Activated naive CD4-positive, alpha-beta T cell treated with anti-CD3 and anti-CD28 coated beads, Interleukin-2, amount 10 ng/mL, durations not matched to agents 7 days and 5 days (primary cell): ENCODE measurements at regions of chr17 and their contacts with region 1.

Region 1: GRCh38 chr17:40317880-40318829 is 9.2 kb downstream of the RARA start:
- DNase-seq: peak; percentile 93
- H3K4me3 Mint-ChIP-seq: peak overlapping the region; percentile 94
- H3K27ac Mint-ChIP-seq: peak overlapping the region; percentile 91
- H3K4me1 Mint-ChIP-seq: peaks cover 68% of the 10 kb centered on the region
- H3K27me3 Mint-ChIP-seq: no peaks in the 10 kb centered on the region

Region 2: GRCh38 chr17:40284085-40284713 is 34.0 kb before region 1 on chr17:
- CTCF ChIA-PET with region 1: no interaction called
- DNase-seq: no peak
- H3K4me3 Mint-ChIP-seq: no peak overlapping the region
- H3K27ac Mint-ChIP-seq: peak overlapping the region; percentile 6
- H3K4me1 Mint-ChIP-seq: peaks cover 47% of the 10 kb centered on the region
- H3K27me3 Mint-ChIP-seq: peaks cover 3% of the 10 kb centered on the region

Region 3: DNA sequence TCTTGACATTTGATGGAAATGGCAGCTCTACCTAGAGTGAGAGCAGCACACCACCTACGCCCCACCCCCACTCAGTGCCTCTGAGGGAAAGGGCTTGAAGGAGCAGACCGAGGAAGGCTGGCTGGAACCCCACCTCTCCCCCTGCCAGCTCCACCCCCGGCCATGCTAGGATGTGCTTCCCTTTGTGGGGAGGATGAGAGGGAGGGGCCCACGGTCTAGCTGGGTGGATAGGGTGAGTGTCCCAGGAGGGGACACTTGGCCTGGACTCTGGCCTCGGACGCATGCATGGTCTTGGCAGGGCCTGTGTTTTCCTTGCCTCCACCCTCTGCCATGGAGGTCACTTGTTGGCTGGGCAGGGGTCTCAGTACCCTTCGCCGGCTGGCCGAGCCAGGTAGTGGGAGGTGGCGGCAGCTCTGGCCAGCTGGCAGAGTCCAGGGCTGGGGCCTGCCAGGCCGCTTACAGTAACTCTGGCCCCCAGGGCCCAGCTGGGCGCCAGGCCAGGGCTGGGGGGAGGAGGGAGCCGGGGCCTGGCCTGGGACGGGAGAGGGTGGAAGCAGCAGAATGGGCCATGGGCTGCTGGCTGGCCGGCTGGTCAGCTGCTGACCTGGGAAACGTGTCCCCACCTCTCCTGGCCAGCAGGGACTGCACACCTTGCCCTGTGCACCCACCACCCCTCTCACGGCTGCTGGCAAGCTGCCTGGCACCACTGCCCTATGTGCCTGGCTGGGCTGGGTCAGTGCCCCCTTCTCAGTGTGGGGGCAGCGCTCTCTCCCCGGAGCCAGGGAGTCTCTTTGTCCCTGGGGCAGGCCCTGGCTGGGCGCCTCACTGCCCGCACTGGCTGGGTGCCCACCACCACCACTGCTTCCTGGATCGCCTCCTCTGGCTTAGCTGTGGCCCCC is 13.8 kb after region 1 on chr17:
- CTCF ChIA-PET with region 1: interaction called, 10 read pairs
- DNase-seq: peak; percentile 50
- H3K4me3 Mint-ChIP-seq: no peak overlapping the region
- H3K27ac Mint-ChIP-seq: peak overlapping the region; percentile 82
- H3K4me1 Mint-ChIP-seq: peaks cover 84% of the 10 kb centered on the region
- H3K27me3 Mint-ChIP-seq: no peaks in the 10 kb centered on the region

Region 4: DNA sequence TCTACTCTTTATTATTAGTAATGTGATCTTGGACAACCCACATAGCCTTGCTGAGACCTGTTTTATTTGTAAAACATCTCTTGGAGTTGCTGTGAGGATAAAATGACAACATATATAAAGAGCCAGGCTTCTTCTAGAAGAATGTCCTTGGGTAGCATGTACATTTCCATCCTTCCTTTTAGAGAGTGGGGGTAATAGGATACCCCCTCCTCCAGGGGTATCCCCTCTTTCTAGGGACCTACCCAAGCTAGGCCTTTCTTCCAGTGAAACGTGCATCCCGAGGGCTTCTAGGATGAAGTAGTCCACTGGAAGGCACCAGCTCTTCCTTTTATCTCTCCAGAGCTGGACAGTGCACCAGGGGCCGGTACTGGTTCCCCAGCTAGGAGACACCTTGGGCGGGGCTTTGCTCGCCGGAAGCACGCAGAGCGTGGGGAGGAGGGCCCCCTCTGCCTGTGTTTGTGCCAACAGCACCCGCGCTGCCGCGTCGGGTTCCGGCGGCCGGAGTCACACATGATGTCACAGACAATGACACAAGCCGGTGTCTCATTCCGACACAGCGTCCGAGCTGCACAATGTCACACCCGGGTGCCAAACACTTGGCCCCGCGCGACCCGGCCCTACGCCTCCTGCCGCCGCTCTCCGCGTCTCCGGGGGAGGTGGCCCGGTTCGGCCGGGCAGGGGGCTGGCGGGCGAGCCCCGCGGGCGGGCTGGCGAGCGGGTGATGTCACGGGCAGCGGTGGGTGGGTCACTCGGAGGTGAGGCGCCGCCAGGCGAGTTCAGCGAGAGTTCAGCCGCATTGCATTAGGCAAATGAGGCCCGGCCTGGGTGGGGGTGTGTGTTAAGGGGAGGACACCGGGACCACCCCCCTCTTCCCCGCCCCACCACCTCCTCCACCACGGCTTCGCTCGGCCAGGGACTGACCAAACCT is 23.0 kb after region 1 on chr17:
- CTCF ChIA-PET with region 1: interaction called, 10 read pairs
- DNase-seq: peak; percentile 91
- H3K4me3 Mint-ChIP-seq: peak overlapping the region; percentile 66
- H3K27ac Mint-ChIP-seq: peak overlapping the region; percentile 88
- H3K4me1 Mint-ChIP-seq: peaks cover 80% of the 10 kb centered on the region
- H3K27me3 Mint-ChIP-seq: no peaks in the 10 kb centered on the region